ENCODE measurements at regions of chr1 and their contacts with region 1.

Region 1: GRCh38 chr1:153510984-153511410 is 24.8 kb downstream of the S100A6 start:
- DNase-seq: peak; percentile 82 to 94
- H3K4me3 ChIP-seq: no peak overlapping the region
- H3K4me1 ChIP-seq: no peaks in the 10 kb centered on the region; the same call in 1 of the 2 replicates
- H3K27me3 ChIP-seq: no peaks in the 10 kb centered on the region

Region 2: DNA sequence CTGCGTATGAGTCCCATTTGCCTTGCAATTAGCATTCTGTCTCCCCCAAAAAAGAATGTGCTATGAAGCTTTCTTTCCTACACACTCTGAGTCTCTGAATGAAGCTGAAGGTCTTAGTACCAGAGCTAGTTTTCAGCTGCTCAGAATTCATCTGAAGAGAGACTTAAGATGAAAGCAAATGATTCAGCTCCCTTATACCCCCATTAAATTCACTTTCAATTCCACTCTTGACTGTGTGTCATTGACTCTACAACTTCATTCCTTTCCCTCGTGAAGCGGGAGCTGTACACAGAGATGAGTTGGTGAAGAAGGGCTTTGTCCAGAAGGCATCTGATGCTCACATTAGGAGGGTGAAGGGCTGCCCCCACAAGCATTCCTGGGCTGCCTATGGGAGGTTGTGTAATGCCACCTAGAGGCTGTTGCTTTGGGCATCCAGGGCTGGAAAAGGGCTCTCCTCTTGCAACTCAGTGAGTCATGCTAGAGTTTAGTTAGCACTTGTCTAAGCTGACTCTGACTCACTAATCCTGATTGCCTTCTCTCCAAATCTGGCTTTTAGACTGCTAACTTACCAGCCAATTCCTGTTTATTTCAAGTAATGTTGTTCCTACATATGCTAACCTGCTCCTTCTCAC is 478.2 kb before region 1 on chr1:
- in situ Hi-C with region 1: no loop called
- DNase-seq: no peak
- H3K4me3 ChIP-seq: no peak overlapping the region
- H3K4me1 ChIP-seq: no peaks in the 10 kb centered on the region
- H3K27me3 ChIP-seq: no peaks in the 10 kb centered on the region

Region 3: GRCh38 chr1:153568367-153569099 is 57.5 kb after region 1 on chr1:
- in situ Hi-C with region 1: loop called (anchors 10 kb)
- DNase-seq: peak; percentile 83 to 93
- H3K4me3 ChIP-seq: no peak overlapping the region
- H3K4me1 ChIP-seq: peaks cover 12% of the 10 kb centered on the region
- H3K27me3 ChIP-seq: no peaks in the 10 kb centered on the region

Region 4: DNA sequence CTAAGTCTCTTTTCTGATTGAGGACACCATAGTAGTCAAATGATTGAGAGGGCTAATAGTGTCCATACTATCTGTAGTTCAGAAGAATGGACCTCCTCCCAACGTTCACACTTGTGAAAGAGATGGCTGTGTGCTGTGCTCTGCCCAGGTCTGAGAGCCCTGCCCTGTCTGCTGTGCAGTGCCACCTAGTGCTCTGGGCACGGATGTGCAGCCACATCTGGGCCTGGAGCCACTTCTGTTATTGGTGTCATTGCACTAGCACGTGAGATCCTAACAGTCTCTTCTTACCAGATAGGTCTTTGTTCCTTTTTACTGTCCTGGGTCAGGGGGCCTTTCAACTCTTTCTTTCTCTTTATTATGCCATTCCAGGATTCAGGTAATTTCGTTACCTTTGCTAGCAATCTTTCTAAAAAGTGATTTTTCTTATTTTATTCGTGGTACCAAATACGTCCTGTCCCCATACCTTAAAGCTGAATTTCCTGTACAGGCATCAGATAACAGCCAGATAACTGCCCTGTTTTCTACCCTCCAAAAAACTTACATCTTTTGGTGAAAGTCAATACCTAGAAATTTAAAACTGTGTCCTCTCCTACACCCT is 238.5 kb after region 1 on chr1:
- in situ Hi-C with region 1: loop called (anchors 10 kb)
- DNase-seq: peak; percentile 68 to 79
- H3K4me3 ChIP-seq: no peak overlapping the region
- H3K4me1 ChIP-seq: no peaks in the 10 kb centered on the region
- H3K27me3 ChIP-seq: no peaks in the 10 kb centered on the region

Region 5: DNA sequence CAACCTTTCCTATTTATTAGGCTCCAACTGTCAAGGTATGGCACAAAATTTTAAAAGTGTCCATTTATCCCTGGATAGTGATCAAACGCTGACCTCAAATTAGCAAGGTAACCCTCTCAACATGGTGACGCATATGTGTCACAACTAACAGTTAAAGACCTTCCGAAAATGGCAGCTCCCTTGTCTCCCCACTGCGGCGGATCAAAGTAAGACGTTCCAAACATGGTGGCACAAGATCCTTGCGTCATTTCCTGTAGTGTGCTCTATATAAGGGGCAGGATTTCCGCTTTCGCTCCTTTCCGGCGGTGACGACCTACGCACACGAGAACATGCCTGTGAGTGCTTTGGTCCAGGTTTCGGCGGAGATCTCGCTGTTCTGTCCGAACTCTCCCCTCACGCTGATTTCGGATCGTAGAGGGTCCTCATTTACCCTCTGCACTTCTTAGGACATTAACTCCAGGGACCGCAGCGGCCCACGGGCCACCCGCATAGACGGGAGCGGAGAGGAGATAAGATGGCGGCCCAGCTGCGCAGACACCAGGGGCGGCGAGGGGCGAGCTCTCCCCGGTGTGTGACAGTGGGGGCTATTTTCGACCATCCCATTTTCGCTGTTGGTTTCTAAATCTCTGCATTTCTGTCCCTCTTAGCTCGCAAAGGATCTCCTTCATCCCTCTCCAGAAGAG is 479.6 kb after region 1 on chr1 and contains the start of gene RPS27:
- in situ Hi-C with region 1: loop called (anchors 10 kb)
- DNase-seq: peak; percentile 94 to 97
- H3K4me3 ChIP-seq: peak within 1 kb of the TSS; percentile 95
- H3K4me1 ChIP-seq: peaks cover 23% of the 10 kb centered on the region
- H3K27me3 ChIP-seq: no peaks in the 10 kb centered on the region

Measured in HAP-1 (cell line).